Activated CD4-positive, alpha-beta T cell treated with anti-CD3 and anti-CD28 coated beads, Interleukin-2, amount 10 ng/mL, durations not matched to agents 24 days and 14 days (primary cell): ENCODE measurements at regions of chr7 and their contacts with region 1.

Region 1: DNA sequence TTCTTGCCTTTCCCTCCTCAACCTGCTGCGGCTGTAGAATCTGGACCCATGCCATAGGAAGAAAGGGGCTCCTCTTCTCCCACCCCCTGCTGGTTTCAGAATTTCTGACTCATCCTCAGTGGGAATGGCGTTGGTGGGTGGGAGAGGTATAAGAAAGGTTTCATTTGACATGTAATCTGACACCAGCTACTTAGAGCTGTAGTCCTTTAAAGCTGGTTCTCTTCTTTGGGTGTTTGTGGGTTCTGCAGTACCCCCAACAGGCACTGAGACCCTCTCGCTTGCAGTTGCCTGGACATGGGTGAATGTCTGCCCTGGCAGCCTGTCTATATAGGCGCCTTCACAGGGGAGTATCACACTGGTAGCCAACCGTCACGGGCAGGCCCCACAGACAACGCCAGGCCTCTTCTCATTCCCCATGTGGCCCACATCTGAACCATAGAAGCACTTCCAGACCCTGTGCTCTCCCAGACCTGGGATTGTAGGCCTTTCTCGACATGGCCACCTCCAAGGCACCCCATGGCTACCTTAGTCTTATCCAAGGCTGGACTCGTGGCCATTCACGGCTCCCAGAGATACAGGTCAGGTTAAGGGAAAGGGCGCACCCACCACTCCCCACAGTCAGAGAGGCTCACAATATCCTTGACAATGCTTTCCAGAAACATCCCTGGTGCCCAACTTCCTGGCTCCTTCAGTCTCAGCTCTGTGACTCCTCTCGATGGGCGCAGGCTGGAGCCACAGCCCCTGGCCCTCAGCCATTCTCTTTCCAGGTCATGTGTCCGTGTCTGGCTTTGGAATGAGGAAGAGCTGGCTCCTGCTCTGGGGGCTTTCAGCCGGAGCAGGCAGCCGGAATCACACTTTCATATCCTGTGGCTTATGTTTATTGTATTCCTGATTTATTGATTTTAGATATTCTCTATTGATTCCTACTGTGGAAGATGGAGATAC is 17.5 kb downstream of the ZNF862 start:
- DNase-seq: no peak
- H3K4me3 Mint-ChIP-seq: peak overlapping the region; percentile 33
- H3K27ac Mint-ChIP-seq: no peak overlapping the region
- H3K4me1 Mint-ChIP-seq: peaks cover 33% of the 10 kb centered on the region
- H3K27me3 Mint-ChIP-seq: no peaks in the 10 kb centered on the region

Region 2: GRCh38 chr7:149547126-149547525 is 308.5 kb before region 1 on chr7:
- intact Hi-C with region 1: no loop called
- DNase-seq: no peak
- H3K4me3 Mint-ChIP-seq: no peak overlapping the region
- H3K27ac Mint-ChIP-seq: no peak overlapping the region
- H3K4me1 Mint-ChIP-seq: no peaks in the 10 kb centered on the region
- H3K27me3 Mint-ChIP-seq: no peaks in the 10 kb centered on the region

Region 3: GRCh38 chr7:149873074-149873969 is 17.7 kb after region 1 on chr7 and contains the start of gene ATP6V0E2:
- intact Hi-C with region 1: loop called (anchors 2 kb)
- DNase-seq: peak; percentile 98
- H3K4me3 Mint-ChIP-seq: peak within 1 kb of the TSS; percentile 90
- H3K27ac Mint-ChIP-seq: peak within 1 kb of the TSS; percentile 92
- H3K4me1 Mint-ChIP-seq: peaks cover 71% of the 10 kb centered on the region
- H3K27me3 Mint-ChIP-seq: no peaks in the 10 kb centered on the region
- total RNA-seq, gene ATP6V0E2: 43.5 and 46.7 TPM in 2 replicates